Mammary epithelial cell (primary cell): ENCODE measurements at regions of chr3 and their contacts with region 1.

Region 1: DNA sequence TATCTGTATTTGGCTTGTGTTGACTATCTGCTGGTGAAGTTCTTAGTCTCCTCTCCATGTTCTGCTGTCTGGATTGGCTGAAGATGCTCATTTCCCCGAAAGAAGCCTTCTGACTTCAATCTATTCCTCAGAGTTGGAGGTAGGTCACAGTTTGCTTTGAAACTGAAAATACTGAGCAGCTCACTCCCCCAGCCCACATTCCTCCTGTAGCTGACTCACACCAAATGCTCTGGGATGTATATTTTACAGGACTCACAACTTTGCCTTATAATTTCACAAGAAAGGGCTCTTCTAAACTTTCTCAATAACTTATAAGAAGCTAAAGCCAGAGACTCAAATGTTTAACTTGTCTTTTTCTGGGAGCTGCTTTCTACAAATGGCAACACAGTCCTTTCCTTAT is 36.3 kb upstream of the SNX4 start:
- DNase-seq: no peak
- H3K4me3 ChIP-seq: no peak overlapping the region
- H3K27ac ChIP-seq: no peak overlapping the region
- H3K4me1 ChIP-seq: no peaks in the 10 kb centered on the region
- H3K27me3 ChIP-seq: no peaks in the 10 kb centered on the region
- CTCF ChIP-seq: no peak

Region 2: GRCh38 chr3:124826703-124827102 is 729.6 kb before region 1 on chr3:
- CTCF ChIA-PET with region 1: no interaction called
- dilution Hi-C with region 1: no loop called
- in situ Hi-C with region 1: no loop called
- intact Hi-C with region 1: no loop called
- DNase-seq: peak; percentile 77
- H3K4me3 ChIP-seq: no peak overlapping the region
- H3K27ac ChIP-seq: peak overlapping the region; percentile 20
- H3K4me1 ChIP-seq: peaks cover 15% of the 10 kb centered on the region
- H3K27me3 ChIP-seq: no peaks in the 10 kb centered on the region
- CTCF ChIP-seq: no peak

Region 3: DNA sequence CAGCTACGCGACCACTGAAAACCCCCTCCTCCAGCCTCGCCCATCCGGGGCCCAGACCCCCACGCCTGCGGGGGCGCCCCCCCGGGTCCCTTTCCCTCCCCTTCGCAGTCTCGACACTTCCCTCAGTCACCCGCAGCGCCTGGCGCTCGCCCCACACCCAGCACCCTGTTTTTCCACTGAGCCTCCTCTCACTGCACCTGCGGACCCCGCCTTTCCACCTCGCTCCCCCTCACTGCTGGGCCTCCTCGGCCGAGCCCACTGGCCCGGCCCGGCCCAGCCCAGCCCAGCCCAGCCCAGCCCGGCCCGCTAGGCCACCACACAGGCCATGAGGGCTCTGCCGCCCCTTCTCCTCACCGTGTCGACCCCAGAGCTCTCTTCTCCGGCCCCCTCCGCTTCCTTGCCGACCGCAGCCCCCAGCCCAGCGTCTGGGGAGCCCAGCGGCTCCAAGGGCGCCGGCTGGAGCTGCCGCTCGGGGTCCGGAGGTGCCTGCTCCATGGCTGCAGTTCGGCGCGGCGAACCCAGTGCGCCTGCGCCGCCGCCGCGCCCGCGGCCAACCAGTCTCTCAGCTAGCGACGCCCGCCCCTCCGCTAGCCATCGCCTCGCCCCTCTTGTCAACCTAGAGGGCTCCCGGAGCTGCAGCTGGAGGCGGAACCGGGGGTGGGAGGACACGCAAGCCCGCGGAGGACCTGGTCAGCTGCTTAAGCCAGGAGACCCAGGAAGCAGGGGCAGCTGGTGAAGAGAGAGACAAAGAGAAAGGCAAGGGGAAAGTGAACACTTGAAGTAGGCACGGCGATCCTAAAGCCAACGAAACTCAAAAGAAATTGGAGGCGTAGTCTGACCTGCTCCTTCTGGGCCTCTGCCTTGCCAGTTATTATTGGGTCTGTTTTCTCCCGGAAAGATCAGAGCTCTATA is 36.4 kb before region 1 on chr3 and contains the start of gene SNX4:
- CTCF ChIA-PET with region 1: no interaction called
- dilution Hi-C with region 1: loop called (anchors 5 kb)
- in situ Hi-C with region 1: no loop called
- intact Hi-C with region 1: no loop called
- DNase-seq: peak; percentile 90
- H3K4me3 ChIP-seq: peak within 1 kb of the TSS; percentile 44 to 97 (median 89)
- H3K27ac ChIP-seq: peak within 1 kb of the TSS; percentile 55
- H3K4me1 ChIP-seq: peaks cover 3% of the 10 kb centered on the region
- H3K27me3 ChIP-seq: no peaks in the 10 kb centered on the region
- CTCF ChIP-seq: no peak
- total RNA-seq, gene SNX4: 16.2 to 21.5 TPM